PC-3 (cell line): ENCODE measurements at regions of chr1 and their contacts with region 1.

Region 1: DNA sequence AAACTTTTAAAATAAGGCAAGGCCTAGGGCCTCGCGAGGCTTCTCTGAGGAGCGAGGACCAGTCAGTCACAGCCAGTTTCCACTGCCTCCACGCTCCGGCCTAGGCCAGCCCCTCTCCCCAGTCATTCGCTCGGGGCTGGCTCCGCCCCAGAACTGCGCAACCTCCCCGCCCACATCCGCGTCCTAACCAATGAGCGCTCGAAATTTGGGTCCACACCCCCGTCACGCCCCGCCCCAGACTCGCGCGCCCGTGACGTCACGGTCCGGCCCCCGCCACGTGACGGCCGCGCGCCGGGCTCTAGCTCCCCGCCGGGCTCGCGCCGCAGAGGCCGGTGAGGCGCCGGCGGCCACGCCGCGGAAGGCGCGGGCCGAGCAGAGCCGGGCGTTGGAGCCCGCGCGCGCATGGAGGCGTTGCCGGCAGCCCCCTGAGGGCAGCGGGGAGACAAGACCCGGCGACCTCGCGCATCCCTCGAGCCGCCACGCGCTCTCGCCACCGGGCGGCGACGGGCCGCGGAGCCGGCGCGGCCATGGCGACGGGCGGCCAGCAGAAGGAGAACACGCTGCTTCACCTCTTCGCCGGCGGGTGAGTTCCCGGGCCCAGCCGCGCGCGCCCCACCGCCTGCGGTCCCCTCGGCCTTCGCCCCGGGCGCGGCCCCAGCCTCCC is at the start of gene SLC25A33:
- DNase-seq: peak; percentile 97
- ATAC-seq: peak; percentile 93
- H3K4me3 ChIP-seq: peak within 1 kb of the TSS; percentile 85
- H3K27ac ChIP-seq: no peak within 1 kb of the TSS
- H3K4me1 ChIP-seq: peaks cover 24% of the 10 kb centered on the region
- H3K27me3 ChIP-seq: no peaks in the 10 kb centered on the region
- CTCF ChIP-seq: no peak
- total RNA-seq, gene SLC25A33: 11.8 and 14.5 TPM in 2 replicates

Region 2: GRCh38 chr1:9558271-9558945 is 19.1 kb after region 1 on chr1:
- CTCF ChIA-PET with region 1: no interaction called
- POLR2A ChIA-PET with region 1: no interaction called
- intact Hi-C with region 1: loop called (anchors 2 kb)
- DNase-seq: no peak
- ATAC-seq: no peak
- H3K4me3 ChIP-seq: no peak overlapping the region
- H3K27ac ChIP-seq: no peak overlapping the region
- H3K4me1 ChIP-seq: peaks cover 27% of the 10 kb centered on the region
- H3K27me3 ChIP-seq: no peaks in the 10 kb centered on the region
- CTCF ChIP-seq: no peak

Region 3: DNA sequence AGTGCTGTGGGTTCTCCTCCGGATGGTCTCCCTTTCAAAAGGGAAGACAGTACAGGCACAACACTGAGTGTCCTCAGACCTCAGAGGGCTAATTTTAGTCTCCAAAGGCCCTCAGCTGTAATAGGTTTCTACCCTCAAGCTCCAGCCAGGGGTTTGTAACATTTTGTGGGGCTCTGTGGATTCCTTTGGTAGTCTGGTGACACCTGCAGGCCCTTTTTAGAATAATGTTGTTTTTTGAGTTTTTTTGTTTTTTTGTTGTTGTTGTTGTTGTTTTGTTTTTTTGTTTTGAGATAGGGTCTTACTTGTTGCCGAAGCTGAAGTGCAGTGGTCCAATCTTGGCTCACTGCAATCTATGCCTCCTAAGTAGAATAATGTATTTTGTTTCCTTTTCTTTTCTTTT is 34.4 kb after region 1 on chr1:
- CTCF ChIA-PET with region 1: interaction called, 3 read pairs
- POLR2A ChIA-PET with region 1: no interaction called
- intact Hi-C with region 1: loop called (anchors 5 kb)
- DNase-seq: peak; percentile 35
- ATAC-seq: no peak
- H3K4me3 ChIP-seq: no peak overlapping the region
- H3K27ac ChIP-seq: no peak overlapping the region
- H3K4me1 ChIP-seq: no peaks in the 10 kb centered on the region
- H3K27me3 ChIP-seq: no peaks in the 10 kb centered on the region
- CTCF ChIP-seq: peak; percentile 61

Region 4: GRCh38 chr1:9671377-9672140 is 132.3 kb after region 1 on chr1:
- CTCF ChIA-PET with region 1: no interaction called
- POLR2A ChIA-PET with region 1: no interaction called
- intact Hi-C with region 1: no loop called
- DNase-seq: peak; percentile 93
- ATAC-seq: peak; percentile 98
- H3K4me3 ChIP-seq: no peak overlapping the region
- H3K27ac ChIP-seq: peak overlapping the region; percentile 80
- H3K4me1 ChIP-seq: peaks cover 23% of the 10 kb centered on the region
- H3K27me3 ChIP-seq: no peaks in the 10 kb centered on the region
- CTCF ChIP-seq: no peak